PC-9 (cell line): ENCODE measurements at regions of chr19 and their contacts with region 1.

Region 1: GRCh38 chr19:43438291-43439096 is 23.8 kb downstream of the TEX101 start:
- DNase-seq: peak; percentile 59 to 82
- H3K4me3 ChIP-seq: peak overlapping the region; percentile 31; the same call in 1 of the 2 replicates
- H3K27ac ChIP-seq: peak overlapping the region; percentile 93
- H3K4me1 ChIP-seq: peaks cover 31% of the 10 kb centered on the region
- H3K27me3 ChIP-seq: no peaks in the 10 kb centered on the region
- CTCF ChIP-seq: no peak

Region 2: DNA sequence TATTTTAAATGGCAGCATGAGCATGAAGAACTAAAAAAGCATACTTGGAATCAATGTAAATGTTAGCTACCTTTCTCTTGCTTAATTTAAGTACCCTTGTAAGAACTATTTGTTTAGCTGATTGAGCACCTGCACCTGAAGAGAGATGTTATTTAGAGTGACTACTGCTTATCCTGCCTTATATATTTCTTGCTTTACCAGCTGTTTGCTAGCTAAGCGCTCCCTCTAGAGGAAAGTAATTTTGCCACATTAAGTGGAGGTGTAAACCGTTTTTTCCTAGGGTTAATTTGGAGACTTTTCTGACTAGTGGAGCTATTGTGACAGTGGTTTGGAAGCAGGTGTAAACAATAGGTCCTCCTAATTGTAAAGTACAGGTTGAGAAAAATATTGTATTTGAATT is 336.5 kb before region 1 on chr19:
- CTCF ChIA-PET with region 1: no interaction called
- POLR2A ChIA-PET with region 1: no interaction called
- intact Hi-C with region 1: loop called (anchors 10 kb)
- DNase-seq: no peak
- H3K4me3 ChIP-seq: no peak overlapping the region
- H3K27ac ChIP-seq: no peak overlapping the region
- H3K4me1 ChIP-seq: no peaks in the 10 kb centered on the region
- H3K27me3 ChIP-seq: no peaks in the 10 kb centered on the region
- CTCF ChIP-seq: peak; percentile 38; the same call in 1 of the 2 replicates

Region 3: DNA sequence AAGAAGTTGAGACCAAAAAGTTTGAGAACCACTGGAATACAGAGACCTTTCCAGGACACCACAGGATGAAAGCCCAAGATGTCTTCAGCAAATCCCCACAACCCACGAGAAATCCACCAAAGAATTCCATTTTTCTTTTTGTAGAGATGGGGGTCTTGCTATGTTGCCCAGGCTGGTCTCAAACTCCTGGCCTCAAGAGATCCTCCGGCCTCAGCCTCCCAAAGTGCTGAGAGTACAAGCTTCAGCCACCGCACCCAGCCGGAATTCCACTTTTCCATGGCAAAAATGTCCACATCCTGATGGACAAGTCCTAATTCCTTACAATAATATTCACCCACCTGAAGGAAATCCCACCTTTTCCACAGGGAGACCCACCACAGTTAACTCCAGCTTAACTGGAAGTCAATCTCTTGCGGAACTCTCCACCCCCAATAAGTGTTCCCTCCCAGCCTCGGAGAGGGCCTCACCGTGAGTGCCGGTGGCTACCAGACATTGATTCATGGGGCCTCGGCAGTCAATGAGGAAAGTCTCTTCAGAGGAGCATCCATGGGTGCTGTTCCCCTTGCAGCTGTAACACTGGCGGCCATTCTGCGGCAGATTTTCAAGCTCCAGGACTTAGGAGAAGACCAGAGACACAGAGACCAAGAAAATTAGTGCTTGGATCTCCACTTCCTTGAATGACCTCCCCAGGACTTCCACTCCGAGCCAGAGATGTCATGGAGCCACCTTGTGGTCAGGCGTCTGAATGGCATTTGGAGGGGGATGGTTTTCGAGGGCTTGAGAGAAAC is 213.5 kb after region 1 on chr19:
- CTCF ChIA-PET with region 1: no interaction called
- POLR2A ChIA-PET with region 1: no interaction called
- intact Hi-C with region 1: loop called (anchors 10 kb)
- DNase-seq: peak; percentile 49 to 61
- H3K4me3 ChIP-seq: no peak overlapping the region
- H3K27ac ChIP-seq: no peak overlapping the region
- H3K4me1 ChIP-seq: no peaks in the 10 kb centered on the region
- H3K27me3 ChIP-seq: no peaks in the 10 kb centered on the region
- CTCF ChIP-seq: peak; percentile 81